PC-3 (cell line): ENCODE measurements at regions of chr5 and their contacts with region 1.

Region 1: GRCh38 chr5:159100025-159100781 is 487 bp upstream of the EBF1 start:
- DNase-seq: peak; percentile 89
- ATAC-seq: peak; percentile 85
- H3K4me3 ChIP-seq: peak overlapping the region; percentile 72
- H3K27ac ChIP-seq: no peak overlapping the region; the same call in 1 of the 2 replicates
- H3K4me1 ChIP-seq: peaks cover 6% of the 10 kb centered on the region; the same call in 1 of the 2 replicates
- H3K27me3 ChIP-seq: peaks cover 9% of the 10 kb centered on the region
- CTCF ChIP-seq: no peak

Region 2: GRCh38 chr5:158739951-158740757 is 360.0 kb before region 1 on chr5:
- CTCF ChIA-PET with region 1: no interaction called
- POLR2A ChIA-PET with region 1: interaction called, 5 read pairs
- intact Hi-C with region 1: loop called (anchors 2 kb)
- DNase-seq: peak; percentile 11
- ATAC-seq: peak; percentile 49; the same call in 1 of the 2 replicates
- H3K4me3 ChIP-seq: no peak overlapping the region
- H3K27ac ChIP-seq: no peak overlapping the region
- H3K4me1 ChIP-seq: no peaks in the 10 kb centered on the region
- H3K27me3 ChIP-seq: no peaks in the 10 kb centered on the region
- CTCF ChIP-seq: peak; percentile 42; the same call in 1 of the 2 replicates

Region 3: GRCh38 chr5:158875272-158875679 is 224.9 kb before region 1 on chr5:
- CTCF ChIA-PET with region 1: no interaction called
- POLR2A ChIA-PET with region 1: no interaction called
- intact Hi-C with region 1: loop called (anchors 1 kb)
- DNase-seq: peak; percentile 55
- ATAC-seq: peak; percentile 96
- H3K4me3 ChIP-seq: peak overlapping the region; percentile 42; the same call in 1 of the 2 replicates
- H3K27ac ChIP-seq: peak overlapping the region; percentile 68
- H3K4me1 ChIP-seq: peaks cover 12% of the 10 kb centered on the region
- H3K27me3 ChIP-seq: no peaks in the 10 kb centered on the region
- CTCF ChIP-seq: no peak

Region 4: DNA sequence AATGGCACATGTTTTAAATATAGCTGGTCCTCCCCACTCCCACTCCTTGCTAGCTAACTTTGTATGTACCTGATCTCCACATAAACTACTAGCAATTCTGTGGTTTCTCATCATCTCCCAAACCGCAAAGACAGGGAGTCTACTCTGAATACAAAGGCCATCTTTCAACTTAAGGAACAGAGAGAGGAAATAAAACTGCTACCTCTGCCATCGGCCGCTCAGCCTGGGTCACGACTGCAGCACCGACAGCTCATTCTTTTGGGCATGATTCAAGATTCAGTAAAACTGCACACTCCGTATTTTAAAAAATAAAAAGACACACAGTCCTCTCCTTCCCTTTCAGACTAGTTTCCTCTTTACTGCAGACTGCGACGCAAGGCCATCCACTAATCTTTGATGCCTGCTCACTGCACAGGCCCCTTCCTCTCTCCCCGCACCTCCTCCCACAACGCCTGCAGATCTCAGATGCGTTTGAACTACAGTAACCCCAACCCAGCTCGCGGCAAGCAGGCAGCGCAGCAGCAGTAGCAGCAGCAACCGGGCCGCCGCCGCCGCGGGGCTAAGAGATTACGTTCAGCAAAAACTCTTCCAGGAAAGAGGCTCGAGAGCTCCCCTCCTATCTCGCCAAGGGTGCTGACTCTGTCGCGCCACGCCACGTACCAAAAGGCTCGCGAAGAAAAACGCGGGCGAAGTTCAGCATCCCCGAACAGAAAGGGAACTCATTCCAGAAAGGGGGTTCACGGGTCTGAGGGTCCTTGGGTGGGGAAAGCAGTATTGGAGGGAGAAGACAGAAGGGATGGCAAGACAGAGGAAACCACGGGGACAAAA is 107.7 kb after region 1 on chr5:
- CTCF ChIA-PET with region 1: no interaction called
- POLR2A ChIA-PET with region 1: no interaction called
- intact Hi-C with region 1: no loop called
- DNase-seq: peak; percentile 77
- ATAC-seq: peak; percentile 52
- H3K4me3 ChIP-seq: peak overlapping the region; percentile 95
- H3K27ac ChIP-seq: peak overlapping the region; percentile 93
- H3K4me1 ChIP-seq: peaks cover 32% of the 10 kb centered on the region
- H3K27me3 ChIP-seq: no peaks in the 10 kb centered on the region
- CTCF ChIP-seq: no peak

Region 5: DNA sequence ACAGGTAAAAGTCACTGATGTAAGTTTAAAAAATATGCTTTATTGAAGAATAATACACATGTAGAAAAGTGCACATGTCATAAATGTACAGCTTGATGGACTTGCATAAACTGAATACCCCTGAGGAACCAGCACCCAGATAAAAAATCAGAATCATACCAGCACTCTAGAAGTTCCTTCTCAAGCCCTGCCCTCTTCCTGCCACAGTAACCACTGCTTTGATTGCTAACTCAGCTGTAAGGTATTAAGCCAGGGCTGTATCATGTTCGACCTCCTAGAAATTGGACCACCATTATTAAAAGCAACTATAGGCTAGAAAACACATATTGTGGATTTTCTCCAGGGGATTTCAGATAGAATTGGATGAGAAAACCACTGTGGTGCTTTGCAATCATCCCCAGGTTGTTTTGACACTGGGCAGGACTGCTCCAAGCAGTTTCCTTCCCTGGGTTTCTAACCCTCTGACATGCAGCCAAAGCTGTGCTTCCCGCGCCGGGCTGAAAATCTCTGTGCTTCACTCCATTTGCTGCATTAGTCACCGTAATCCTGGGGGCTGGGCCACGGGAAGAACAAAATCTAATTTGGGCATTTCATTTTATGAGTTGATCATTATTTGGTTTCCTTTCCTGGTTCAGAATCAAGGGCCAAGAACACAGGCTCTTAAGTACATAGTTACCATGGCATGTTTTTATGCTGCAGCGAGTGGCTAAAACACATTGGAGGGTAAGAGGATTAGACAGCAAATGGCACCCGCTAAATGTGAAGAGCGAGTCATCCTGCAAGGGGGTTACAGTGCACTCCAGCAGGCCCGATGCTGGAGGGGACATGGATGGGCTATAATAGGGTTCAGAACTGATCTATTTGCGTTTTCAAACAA is 369.5 kb after region 1 on chr5:
- CTCF ChIA-PET with region 1: no interaction called
- POLR2A ChIA-PET with region 1: no interaction called
- intact Hi-C with region 1: no loop called
- DNase-seq: peak; percentile 61
- ATAC-seq: peak; percentile 95
- H3K4me3 ChIP-seq: no peak overlapping the region
- H3K27ac ChIP-seq: peak overlapping the region; percentile 23; the same call in 1 of the 2 replicates
- H3K4me1 ChIP-seq: peaks cover 11% of the 10 kb centered on the region
- H3K27me3 ChIP-seq: no peaks in the 10 kb centered on the region
- CTCF ChIP-seq: no peak